Transverse colon (tissue), 4 donors: ENCODE measurements at regions of chr5 and their contacts with region 1.

Region 1: DNA sequence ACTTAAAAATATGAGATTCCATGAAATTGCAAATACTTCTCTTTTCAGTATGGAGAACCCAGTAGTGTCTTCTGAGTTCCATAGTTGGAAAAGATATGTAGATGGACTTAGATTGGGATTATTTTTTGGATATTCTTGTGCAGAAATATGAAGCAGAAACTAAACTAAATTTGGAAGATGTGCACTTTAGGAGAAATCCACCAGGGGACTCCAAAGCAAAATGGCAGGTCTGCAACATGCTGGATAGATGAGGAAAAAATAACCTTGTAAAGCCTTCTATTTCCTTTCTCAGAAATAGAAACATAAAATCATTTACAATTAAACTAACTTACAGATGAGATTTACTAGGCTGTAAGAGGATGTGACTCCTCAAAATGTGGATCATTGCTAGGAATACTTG is 49.2 kb upstream of the MINAR2 start:
- DNase-seq: no peak
- H3K4me3 ChIP-seq: no peak overlapping the region
- H3K27ac ChIP-seq: no peak overlapping the region
- H3K4me1 ChIP-seq: peaks cover 0 to 10% (median 0%) of the 10 kb centered on the region in 4 donors
- H3K27me3 ChIP-seq: no peaks in the 10 kb centered on the region
- CTCF ChIP-seq: no peak
- EP300 ChIP-seq: no peak
- POLR2A ChIP-seq: no peak

Region 2: DNA sequence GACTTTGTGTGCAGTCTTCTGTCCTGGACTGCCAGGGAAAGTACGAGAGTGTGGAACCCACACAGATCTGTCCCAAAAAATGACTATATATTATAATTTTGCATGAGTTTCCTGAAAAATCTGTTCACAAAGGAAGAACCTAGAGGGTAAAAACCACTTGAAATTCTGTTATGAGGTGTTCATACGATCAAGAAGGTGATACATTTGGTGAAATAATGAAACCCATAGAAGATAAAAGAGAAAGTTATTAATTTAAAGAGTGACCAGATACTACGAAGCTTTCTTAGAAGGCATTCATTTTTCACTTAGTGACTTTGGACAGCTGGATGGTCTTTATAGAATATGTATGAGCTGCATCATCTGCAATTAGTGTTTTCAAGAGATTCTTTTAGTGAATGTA is 1582.2 kb before region 1 on chr5:
- in situ Hi-C with region 1: no loop called
- intact Hi-C with region 1: loop called (anchors 5 kb)
- DNase-seq: no peak
- H3K4me3 ChIP-seq: no peak overlapping the region
- H3K27ac ChIP-seq: no peak overlapping the region
- H3K4me1 ChIP-seq: no peaks in the 10 kb centered on the region
- H3K27me3 ChIP-seq: no peaks in the 10 kb centered on the region
- CTCF ChIP-seq: no peak
- EP300 ChIP-seq: no peak
- POLR2A ChIP-seq: no peak

Region 3: GRCh38 chr5:130260481-130260880 is 561.8 kb after region 1 on chr5:
- in situ Hi-C with region 1: no loop called
- intact Hi-C with region 1: no loop called
- DNase-seq: no peak
- H3K4me3 ChIP-seq: no peak overlapping the region
- H3K27ac ChIP-seq: no peak overlapping the region
- H3K4me1 ChIP-seq: no peaks in the 10 kb centered on the region
- H3K27me3 ChIP-seq: no peaks in the 10 kb centered on the region
- CTCF ChIP-seq: no peak
- EP300 ChIP-seq: no peak
- POLR2A ChIP-seq: no peak